ENCODE measurements at regions of chr2 and their contacts with region 1.

Region 1: GRCh38 chr2:112726497-112727190 is 5.8 kb downstream of the NT5DC4 start:
- DNase-seq: peak; percentile 81
- H3K4me3 ChIP-seq: no peak overlapping the region
- H3K27ac ChIP-seq: no peak overlapping the region
- H3K27me3 ChIP-seq: no peaks in the 10 kb centered on the region
- CTCF ChIP-seq: peak; percentile 97

Region 2: DNA sequence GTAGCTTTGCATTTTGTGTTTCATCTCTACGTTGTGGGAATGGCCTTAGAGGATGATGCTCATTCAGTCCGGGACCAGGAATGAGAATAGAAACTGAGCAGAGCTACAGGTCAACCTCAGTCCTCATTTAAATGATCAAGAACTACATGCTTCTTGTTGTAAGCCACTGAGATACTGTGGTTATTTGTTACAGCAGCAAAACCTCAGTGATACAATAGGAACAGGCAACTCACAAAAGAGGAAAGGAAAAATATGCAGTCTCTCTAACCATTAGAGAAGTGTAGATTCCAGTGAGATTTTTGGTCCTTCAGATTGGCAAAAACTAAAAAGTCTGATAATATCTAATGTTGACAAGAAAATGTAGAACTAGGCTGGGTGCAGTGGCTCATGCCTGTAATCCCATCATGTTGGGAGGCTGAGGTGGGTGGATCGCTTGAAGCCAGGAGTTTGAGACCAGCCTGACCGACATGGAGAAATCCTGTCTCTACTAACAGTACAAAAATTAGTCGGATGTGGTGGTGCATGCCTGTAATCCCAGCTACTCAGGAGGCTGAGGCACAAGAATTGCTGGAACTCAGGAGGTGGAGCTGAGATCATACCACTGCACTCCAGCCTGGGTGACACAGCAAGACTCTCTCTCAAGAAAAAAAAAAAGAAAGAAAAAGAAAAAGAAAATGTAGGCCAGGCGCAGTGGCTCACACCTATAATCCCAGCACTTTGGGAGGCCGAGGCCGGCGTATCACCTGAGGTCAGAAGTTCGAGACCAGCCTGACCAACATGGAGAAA is 128.9 kb before region 1 on chr2:
- CTCF ChIA-PET with region 1: interaction called, 225 read pairs
- POLR2A ChIA-PET with region 1: interaction called, 5 read pairs
- DNase-seq: no peak
- H3K4me3 ChIP-seq: no peak overlapping the region
- H3K27ac ChIP-seq: no peak overlapping the region
- H3K27me3 ChIP-seq: no peaks in the 10 kb centered on the region
- CTCF ChIP-seq: no peak

Region 3: DNA sequence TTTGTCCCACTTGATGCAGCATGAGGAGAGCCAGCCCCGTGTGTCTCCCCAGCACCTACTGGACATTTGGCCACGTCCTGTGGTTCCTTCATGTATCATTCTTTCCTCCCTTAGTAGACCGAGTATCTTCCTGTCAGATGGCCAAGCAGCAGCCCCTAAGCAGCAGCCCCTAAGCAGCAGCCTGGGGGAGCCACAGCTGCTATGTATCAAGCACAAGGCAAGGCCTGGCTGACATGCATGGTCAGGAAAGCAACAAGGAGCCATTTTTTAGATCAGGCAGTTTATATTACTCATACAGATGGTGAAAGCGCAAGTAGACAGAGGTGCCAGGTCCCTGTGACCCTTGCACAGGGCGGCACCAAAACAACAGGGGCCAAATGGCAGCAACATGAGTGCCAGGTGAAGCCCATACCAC is 120.1 kb before region 1 on chr2:
- CTCF ChIA-PET with region 1: interaction called, 225 read pairs
- POLR2A ChIA-PET with region 1: interaction called, 3 read pairs
- DNase-seq: no peak
- H3K4me3 ChIP-seq: no peak overlapping the region
- H3K27ac ChIP-seq: peak overlapping the region; percentile 21
- H3K27me3 ChIP-seq: no peaks in the 10 kb centered on the region
- CTCF ChIP-seq: no peak

Region 4: DNA sequence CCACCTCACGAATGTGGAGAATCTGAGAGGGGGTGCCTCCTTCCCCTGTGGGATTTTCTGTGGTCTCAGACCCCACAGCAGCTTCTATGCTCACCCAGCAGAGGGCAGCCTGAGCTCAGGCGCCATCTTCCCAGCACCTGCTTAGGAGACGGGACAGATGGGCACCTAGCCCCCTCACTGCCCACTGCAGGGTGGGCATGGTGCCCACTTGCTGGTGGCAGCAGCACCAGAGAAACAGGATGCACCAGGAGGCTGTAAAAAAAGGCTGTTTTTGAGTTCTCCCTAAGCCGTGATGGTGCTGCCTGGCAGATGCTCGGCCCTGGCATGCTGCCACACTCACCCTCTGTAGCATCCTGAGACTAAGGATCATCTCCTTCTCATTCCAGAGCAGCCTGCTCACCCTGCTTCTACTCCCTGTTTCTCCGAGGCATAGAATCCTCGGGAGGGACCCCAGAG is 100.0 kb before region 1 on chr2:
- CTCF ChIA-PET with region 1: interaction called, 151 read pairs
- POLR2A ChIA-PET with region 1: interaction called, 4 read pairs
- DNase-seq: no peak
- H3K4me3 ChIP-seq: peak overlapping the region; percentile 35
- H3K27ac ChIP-seq: peak overlapping the region; percentile 95
- H3K27me3 ChIP-seq: no peaks in the 10 kb centered on the region
- CTCF ChIP-seq: peak; percentile 93

Region 5: DNA sequence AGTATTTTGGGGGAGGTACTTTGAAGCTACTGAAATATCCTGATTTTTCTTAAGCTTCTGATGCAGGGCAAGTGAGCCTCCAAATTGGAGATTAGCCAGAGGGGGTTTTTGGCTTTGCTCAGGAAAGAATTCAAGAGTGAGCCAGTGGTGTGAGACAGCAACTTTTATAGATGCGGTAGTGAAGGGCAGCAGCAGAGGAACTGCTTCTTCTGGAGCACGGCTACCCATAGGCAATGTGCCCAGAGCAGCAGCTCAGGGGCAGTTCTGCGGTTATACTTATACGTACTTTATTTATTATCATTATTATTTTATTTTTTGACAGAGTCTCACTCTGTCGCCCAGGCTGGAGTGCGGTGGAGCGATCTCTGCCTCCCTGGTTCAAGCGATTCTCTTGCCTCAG is 25.6 kb before region 1 on chr2:
- CTCF ChIA-PET with region 1: interaction called, 14 read pairs
- POLR2A ChIA-PET with region 1: no interaction called
- DNase-seq: no peak
- H3K4me3 ChIP-seq: no peak overlapping the region
- H3K27ac ChIP-seq: no peak overlapping the region
- H3K27me3 ChIP-seq: no peaks in the 10 kb centered on the region
- CTCF ChIP-seq: no peak

Region 6: DNA sequence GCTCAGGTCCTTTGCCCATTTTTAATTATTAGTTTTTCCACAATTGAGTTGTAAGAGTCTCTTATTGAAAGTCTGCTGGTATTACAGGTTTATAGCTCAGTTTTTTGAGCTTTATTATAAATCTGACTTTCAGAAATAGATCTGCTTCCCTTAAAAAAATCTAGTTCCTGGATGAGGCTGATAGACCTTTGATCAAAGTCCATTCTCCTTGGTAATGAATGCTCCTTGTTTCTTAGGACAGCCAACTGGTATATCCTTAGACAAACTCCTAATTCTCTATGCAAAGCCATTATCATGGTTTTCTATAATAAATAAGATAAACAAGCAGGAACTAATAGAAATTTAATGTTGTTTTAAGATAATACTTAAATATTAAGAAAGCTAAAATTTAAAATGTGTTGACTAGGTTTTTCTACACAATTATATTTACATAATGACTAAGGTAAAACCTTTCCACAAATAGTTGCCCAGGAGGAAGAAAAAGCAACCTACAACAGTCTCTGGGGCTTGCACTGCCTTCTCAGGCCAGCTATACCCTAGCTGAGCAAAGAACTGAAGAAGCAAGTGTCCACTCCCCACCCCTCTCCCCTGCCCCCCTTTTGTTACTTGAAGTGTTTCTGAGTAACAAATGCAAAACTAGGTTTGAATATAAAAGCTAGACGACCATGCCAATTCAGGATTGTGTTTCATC is 11.0 kb after region 1 on chr2:
- CTCF ChIA-PET with region 1: interaction called, 13 read pairs
- POLR2A ChIA-PET with region 1: no interaction called
- DNase-seq: no peak
- H3K4me3 ChIP-seq: no peak overlapping the region
- H3K27ac ChIP-seq: no peak overlapping the region
- H3K27me3 ChIP-seq: no peaks in the 10 kb centered on the region
- CTCF ChIP-seq: no peak

Region 7: DNA sequence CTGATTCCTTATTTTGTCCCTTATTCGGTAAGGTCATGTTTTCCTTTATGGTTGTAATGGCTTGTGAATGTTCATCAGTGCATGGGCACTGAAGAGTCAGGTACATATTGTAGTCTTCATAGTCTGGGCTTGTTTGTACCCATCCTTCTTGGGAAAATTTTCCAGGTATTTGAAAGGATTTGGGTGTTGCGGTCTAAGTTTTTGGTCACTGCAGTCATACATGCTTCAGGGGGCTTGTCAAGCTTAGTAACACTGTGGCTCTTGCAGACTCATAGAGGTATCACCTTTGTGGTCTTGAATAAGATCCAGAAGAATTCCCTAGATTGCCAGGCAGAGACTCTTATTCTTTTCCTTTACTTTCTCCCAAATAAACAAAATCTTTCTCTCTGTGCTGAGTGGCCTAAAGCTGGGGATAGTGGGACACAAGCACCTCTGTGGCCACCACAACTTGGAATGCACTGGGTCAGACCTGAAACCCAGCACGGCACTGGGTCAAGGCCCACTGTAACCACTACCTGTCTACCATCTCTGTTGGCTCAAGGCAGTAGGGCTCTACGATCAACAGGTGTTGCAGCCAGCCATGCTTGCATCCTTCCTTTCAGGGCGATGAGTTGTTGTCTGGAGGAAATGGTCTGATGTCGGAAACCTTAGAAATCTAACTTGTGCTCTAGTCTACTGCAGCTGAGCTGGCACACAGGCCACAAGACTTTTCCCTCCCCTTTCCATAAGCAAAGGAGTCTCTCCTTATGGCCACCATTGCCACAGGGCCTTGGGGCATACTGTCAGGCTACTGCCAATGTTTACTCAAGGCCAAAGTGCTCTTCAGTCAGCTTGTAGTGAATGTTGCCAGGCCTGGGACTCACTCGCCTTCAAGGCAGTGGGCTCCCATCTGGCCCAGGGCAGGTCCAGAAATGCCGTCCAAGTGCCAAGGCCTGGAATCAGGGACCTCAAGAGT is 422.2 kb after region 1 on chr2:
- CTCF ChIA-PET with region 1: no interaction called
- POLR2A ChIA-PET with region 1: no interaction called
- DNase-seq: no peak
- H3K4me3 ChIP-seq: no peak overlapping the region
- H3K27ac ChIP-seq: no peak overlapping the region
- H3K27me3 ChIP-seq: peaks cover 3% of the 10 kb centered on the region
- CTCF ChIP-seq: no peak

Measured in AG04450 (cell line).